Common myeloid progenitor, CD34-positive (primary cell): ENCODE measurements at regions of chr3 and their contacts with region 1.

Region 1: GRCh38 chr3:127779747-127780146 is 42.6 kb downstream of the MGLL start:
- DNase-seq: peak; percentile 59 to 89 (median 70)
- H3K4me3 ChIP-seq: peak overlapping the region in 2 of 7 experiments; percentile 24 to 25
- H3K27ac ChIP-seq: peak overlapping the region in 1 of 2 experiments; percentile 36
- H3K4me1 ChIP-seq: peaks cover 3 to 55% (median 48%) of the 10 kb centered on the region in 4 experiments
- H3K27me3 ChIP-seq: no peaks in the 10 kb centered on the region

Region 2: DNA sequence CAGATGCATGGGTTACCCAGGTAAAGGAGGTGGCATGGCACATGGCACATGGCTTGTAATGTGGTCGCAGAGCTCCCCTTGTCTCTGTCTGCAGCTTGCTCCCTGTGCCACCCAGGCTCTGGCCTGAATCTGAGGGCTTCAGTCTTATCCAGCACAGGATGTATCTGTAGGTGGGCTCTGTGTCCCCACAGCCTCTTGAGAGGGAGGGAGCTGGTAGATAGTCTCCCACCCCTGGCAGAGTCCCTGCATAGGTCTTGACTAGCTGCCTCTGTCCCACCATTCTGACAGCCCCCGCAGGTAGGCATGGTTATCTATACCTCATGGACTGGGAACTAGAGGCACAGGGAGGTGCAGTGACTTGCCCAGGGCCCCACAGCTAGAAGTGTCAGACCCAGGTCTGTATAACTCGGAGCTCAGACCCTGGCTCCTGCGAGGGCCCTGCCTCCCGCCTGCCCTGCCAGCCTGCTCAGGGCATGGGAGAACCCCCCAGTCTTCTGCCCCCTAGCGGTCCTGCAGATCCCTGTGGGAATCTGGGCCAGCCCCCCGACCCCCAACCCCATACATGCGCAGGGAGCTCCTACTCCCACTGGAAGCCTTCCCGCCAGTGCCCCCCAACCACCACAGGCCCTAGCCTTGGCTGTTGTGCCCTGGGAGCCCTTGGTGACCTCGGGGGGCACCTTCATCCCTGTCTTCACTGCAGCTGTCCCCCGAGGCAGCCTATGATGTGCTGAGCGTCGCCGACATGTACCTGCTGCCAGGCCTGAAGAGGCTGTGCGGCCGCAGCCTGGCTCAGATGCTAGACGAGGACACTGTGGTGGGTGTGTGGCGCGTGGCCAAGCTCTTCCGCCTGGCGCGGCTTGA is 100.2 kb before region 1 on chr3:
- CTCF ChIA-PET with region 1: no interaction called
- POLR2A ChIA-PET with region 1: no interaction called
- DNase-seq: no peak
- H3K4me3 ChIP-seq: no peak overlapping the region
- H3K27ac ChIP-seq: no peak overlapping the region
- H3K4me1 ChIP-seq: peaks cover 0 to 17% (median 10%) of the 10 kb centered on the region in 4 experiments
- H3K27me3 ChIP-seq: no peaks in the 10 kb centered on the region

Region 3: GRCh38 chr3:127750226-127751031 is 29.3 kb before region 1 on chr3:
- CTCF ChIA-PET with region 1: interaction called, 15 read pairs
- POLR2A ChIA-PET with region 1: no interaction called
- DNase-seq: peak in 2 of 3 donors; percentile 89 to 91
- H3K4me3 ChIP-seq: peak overlapping the region in 1 of 7 experiments; percentile 1
- H3K27ac ChIP-seq: no peak overlapping the region
- H3K4me1 ChIP-seq: peaks cover 0 to 56% (median 50%) of the 10 kb centered on the region in 4 experiments
- H3K27me3 ChIP-seq: no peaks in the 10 kb centered on the region